Ascending aorta (tissue), 2 donors: ENCODE measurements at regions of chr14 and their contacts with region 1.

Region 1: GRCh38 chr14:53055003-53055402 is 98.1 kb downstream of the DDHD1 start:
- DNase-seq: no peak
- H3K4me3 ChIP-seq: no peak overlapping the region
- H3K27ac ChIP-seq: no peak overlapping the region
- H3K4me1 ChIP-seq: no peaks in the 10 kb centered on the region
- H3K27me3 ChIP-seq: no peaks in the 10 kb centered on the region
- CTCF ChIP-seq: peak; percentile 19 to 77 (median 74)

Region 2: GRCh38 chr14:52961060-52961639 is 93.9 kb before region 1 on chr14:
- intact Hi-C with region 1: loop called (anchors 5 kb)
- DNase-seq: peak in 1 of 2 donors; percentile 78
- H3K4me3 ChIP-seq: no peak overlapping the region
- H3K27ac ChIP-seq: peak overlapping the region; percentile 60 to 64
- H3K4me1 ChIP-seq: peaks cover 0 to 8% of the 10 kb centered on the region in 2 donors
- H3K27me3 ChIP-seq: no peaks in the 10 kb centered on the region
- CTCF ChIP-seq: peak; percentile 70 to 78 (median 78)

Region 3: DNA sequence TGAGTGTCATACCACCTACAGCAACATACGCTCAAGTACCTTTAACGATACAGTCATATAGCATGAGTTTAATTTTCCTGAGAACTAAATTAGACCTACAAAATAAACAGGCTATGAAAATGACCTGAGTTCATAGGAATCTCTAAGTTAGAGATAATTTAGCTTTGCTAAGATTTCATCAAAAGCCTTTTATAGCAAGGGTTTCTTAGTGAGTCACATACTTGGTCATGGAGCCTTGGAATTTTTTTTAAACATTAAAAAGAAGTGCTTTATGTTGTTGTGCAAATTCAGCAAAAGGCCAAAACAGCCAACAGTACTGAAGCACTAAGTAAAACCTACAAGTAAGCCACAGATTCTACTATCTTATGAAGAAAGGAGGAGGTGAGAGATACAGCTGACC is 10.5 kb before region 1 on chr14:
- intact Hi-C with region 1: no loop called
- DNase-seq: no peak
- H3K4me3 ChIP-seq: no peak overlapping the region
- H3K27ac ChIP-seq: peak overlapping the region; percentile 58
- H3K4me1 ChIP-seq: peaks cover 0 to 26% of the 10 kb centered on the region in 2 donors
- H3K27me3 ChIP-seq: no peaks in the 10 kb centered on the region
- CTCF ChIP-seq: no peak